ENCODE measurements at regions of chr11 and their contacts with region 1.

Region 1: DNA sequence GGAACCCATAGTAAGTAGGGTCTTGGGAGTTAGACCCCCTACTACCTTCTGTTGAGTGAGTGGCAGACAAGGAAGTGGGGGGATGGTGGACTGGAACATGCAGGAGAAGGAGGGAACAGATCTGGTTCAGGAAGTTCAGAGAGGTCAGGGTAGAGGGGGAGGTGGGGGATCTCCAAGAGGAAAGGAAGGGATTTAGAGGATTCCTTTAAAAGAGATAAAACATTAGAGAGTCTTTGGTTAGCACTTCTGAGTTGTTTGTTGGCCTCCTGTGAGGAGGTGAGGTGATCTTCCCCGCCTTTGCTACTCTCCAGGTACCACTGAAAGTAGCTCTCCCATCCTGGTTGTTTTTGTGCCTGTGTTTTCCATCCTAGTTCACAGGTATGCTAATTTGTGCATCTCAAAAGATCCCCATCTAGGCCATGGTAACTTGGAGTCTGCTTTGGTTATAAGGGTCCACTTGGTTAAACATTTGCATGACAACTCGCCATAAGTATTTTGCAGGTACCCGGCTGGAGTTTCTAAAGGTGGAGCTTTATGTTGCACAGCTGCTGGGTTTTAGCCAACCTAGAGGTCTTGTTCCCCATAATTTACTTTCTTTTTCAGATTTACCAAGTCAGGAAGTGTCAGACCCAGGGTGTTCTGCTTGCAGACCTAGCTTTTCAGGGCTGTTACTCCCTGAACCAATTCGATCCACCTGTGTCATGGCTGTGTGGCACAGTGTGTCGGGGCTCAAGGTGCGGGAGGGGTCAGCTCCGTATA is 79.3 kb upstream of the SORL1 start:
- DNase-seq: peak in 4 of 5 donors; percentile 12 to 32 (median 23)
- H3K4me3 ChIP-seq: no peak overlapping the region
- H3K4me3 Mint-ChIP-seq: peak overlapping the region in 7 of 8 donors; percentile 8 to 73 (median 54)
- H3K27ac ChIP-seq: no peak overlapping the region
- H3K27ac Mint-ChIP-seq: peak overlapping the region; percentile 25 to 82 (median 64)
- H3K4me1 ChIP-seq: peaks cover 62% of the 10 kb centered on the region
- H3K4me1 Mint-ChIP-seq: peaks cover 48 to 84% (median 66%) of the 10 kb centered on the region in 4 donors
- H3K27me3 ChIP-seq: no peaks in the 10 kb centered on the region
- H3K27me3 Mint-ChIP-seq: peaks cover 0 to 1% of the 10 kb centered on the region in 2 donors

Region 2: GRCh38 chr11:121328967-121329679 is 43.7 kb before region 1 on chr11:
- CTCF ChIA-PET with region 1: interaction called, 3 read pairs
- POLR2A ChIA-PET with region 1: interaction called, 11 read pairs
- intact Hi-C with region 1: loop called (anchors 5 kb)
- DNase-seq: peak in 3 of 5 donors; percentile 15 to 25 (median 22)
- H3K4me3 ChIP-seq: no peak overlapping the region
- H3K4me3 Mint-ChIP-seq: no peak overlapping the region
- H3K27ac ChIP-seq: peak overlapping the region; percentile 31
- H3K27ac Mint-ChIP-seq: no peak overlapping the region
- H3K4me1 ChIP-seq: peaks cover 40% of the 10 kb centered on the region
- H3K4me1 Mint-ChIP-seq: peaks cover 10 to 13% (median 11%) of the 10 kb centered on the region in 4 donors
- H3K27me3 ChIP-seq: no peaks in the 10 kb centered on the region
- H3K27me3 Mint-ChIP-seq: peaks cover 0 to 2% of the 10 kb centered on the region in 2 donors

Region 3: GRCh38 chr11:121417055-121417551 is 44.3 kb after region 1 on chr11:
- CTCF ChIA-PET with region 1: interaction called, 3 read pairs
- POLR2A ChIA-PET with region 1: interaction called, 8 read pairs
- intact Hi-C with region 1: loop called (anchors 5 kb)
- DNase-seq: peak; percentile 58 to 72 (median 63)
- H3K4me3 ChIP-seq: no peak overlapping the region
- H3K4me3 Mint-ChIP-seq: peak overlapping the region in 7 of 8 donors; percentile 49 to 81 (median 68)
- H3K27ac ChIP-seq: peak overlapping the region; percentile 36
- H3K27ac Mint-ChIP-seq: peak overlapping the region; percentile 91 to 96 (median 93)
- H3K4me1 ChIP-seq: peaks cover 72% of the 10 kb centered on the region
- H3K4me1 Mint-ChIP-seq: peaks cover 51 to 85% (median 71%) of the 10 kb centered on the region in 4 donors
- H3K27me3 ChIP-seq: no peaks in the 10 kb centered on the region
- H3K27me3 Mint-ChIP-seq: no peaks in the 10 kb centered on the region

Measured in CD4-positive, alpha-beta memory T cell (primary cell).